GM12878 (cell line): ENCODE measurements at regions of chr6 and their contacts with region 1.

Region 1: DNA sequence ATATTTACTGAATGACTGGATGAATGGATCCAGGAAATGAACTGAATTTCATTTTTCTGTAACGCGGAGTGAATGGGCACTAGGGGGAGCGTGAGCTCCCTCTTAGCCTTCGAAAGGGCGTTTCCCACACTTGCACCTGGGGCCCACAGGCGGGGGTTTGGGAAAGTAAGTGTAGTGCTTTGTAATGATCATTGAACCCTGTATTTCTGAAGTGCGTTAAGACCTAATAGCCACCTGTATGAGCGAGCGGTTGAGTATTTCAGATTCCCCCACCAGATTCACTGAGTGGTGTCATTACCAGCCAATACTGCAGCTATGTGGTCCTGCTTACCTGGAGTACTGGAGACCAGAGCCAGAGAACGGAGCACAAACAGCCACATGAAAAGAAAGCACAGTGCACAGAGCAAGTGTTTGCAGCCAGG is 10.5 kb downstream of the SYTL3 start:
- DNase-seq: no peak
- ATAC-seq: peak; percentile 76
- H3K4me3 ChIP-seq: no peak overlapping the region
- H3K27ac ChIP-seq: no peak overlapping the region
- H3K4me1 ChIP-seq: peaks cover 9% of the 10 kb centered on the region
- H3K27me3 ChIP-seq: no peaks in the 10 kb centered on the region
- CTCF ChIP-seq: peak; percentile 57 to 70 (median 62)
- EP300 ChIP-seq: no peak
- POLR2A ChIP-seq: no peak
- RAD21 ChIP-seq: peak; percentile 59

Region 2: DNA sequence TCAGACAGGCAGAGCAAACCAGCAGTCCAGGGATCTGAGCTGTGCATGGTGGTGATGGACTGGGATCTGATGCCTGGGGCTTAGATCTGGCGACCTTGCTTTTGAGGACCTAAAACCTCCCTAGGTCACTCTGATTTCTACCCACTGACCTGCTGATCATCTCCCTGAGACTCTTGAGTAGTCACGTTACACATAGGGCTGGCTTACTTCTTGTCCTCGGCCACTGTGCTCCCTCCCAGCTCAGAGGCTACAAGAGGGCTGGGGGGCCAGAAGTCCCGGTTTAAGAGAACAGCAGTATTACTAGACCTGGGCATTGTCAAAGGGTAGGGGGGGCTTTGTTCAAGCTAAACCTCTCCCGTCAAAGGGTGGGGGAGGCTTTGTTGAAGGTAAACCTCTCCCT is 21.3 kb before region 1 on chr6:
- CTCF ChIA-PET with region 1: interaction called, 23 read pairs
- POLR2A ChIA-PET with region 1: no interaction called
- RAD21 ChIA-PET with region 1: interaction called, 9 read pairs
- SMC1A ChIA-PET with region 1: interaction called, 41 read pairs
- in situ Hi-C with region 1: no loop called
- intact Hi-C with region 1: no loop called
- DNase-seq: no peak
- ATAC-seq: no peak; the same call in 2 of the 3 replicates
- H3K4me3 ChIP-seq: no peak overlapping the region
- H3K27ac ChIP-seq: no peak overlapping the region
- H3K4me1 ChIP-seq: peaks cover 5% of the 10 kb centered on the region; the same call in 1 of the 2 replicates
- H3K27me3 ChIP-seq: no peaks in the 10 kb centered on the region
- CTCF ChIP-seq: no peak
- EP300 ChIP-seq: no peak
- POLR2A ChIP-seq: no peak
- RAD21 ChIP-seq: no peak

Region 3: GRCh38 chr6:158644231-158645063 is 15.9 kb before region 1 on chr6 and contains the start of gene DYNLT1:
- CTCF ChIA-PET with region 1: interaction called, 34 read pairs
- POLR2A ChIA-PET with region 1: interaction called, 4 read pairs
- RAD21 ChIA-PET with region 1: interaction called, 19 read pairs
- SMC1A ChIA-PET with region 1: interaction called, 41 read pairs
- in situ Hi-C with region 1: no loop called
- intact Hi-C with region 1: no loop called
- DNase-seq: peak; percentile 71
- ATAC-seq: peak; percentile 71
- H3K4me3 ChIP-seq: peak within 1 kb of the TSS; percentile 81
- H3K27ac ChIP-seq: peak within 1 kb of the TSS; percentile 82
- H3K4me1 ChIP-seq: peaks cover 26% of the 10 kb centered on the region
- H3K27me3 ChIP-seq: no peaks in the 10 kb centered on the region
- CTCF ChIP-seq: no peak
- EP300 ChIP-seq: no peak
- POLR2A ChIP-seq: peak; percentile 97
- RAD21 ChIP-seq: no peak
- polyA plus RNA-seq, gene DYNLT1: 246 to 298 TPM